Left colon (tissue), 2 donors: ENCODE measurements at regions of chr9 and their contacts with region 1.

Region 1: GRCh38 chr9:96217754-96218693 is 84.0 kb downstream of the HSD17B3 start:
- DNase-seq: peak; percentile 44 to 83
- ATAC-seq: peak; percentile 94

Region 2: DNA sequence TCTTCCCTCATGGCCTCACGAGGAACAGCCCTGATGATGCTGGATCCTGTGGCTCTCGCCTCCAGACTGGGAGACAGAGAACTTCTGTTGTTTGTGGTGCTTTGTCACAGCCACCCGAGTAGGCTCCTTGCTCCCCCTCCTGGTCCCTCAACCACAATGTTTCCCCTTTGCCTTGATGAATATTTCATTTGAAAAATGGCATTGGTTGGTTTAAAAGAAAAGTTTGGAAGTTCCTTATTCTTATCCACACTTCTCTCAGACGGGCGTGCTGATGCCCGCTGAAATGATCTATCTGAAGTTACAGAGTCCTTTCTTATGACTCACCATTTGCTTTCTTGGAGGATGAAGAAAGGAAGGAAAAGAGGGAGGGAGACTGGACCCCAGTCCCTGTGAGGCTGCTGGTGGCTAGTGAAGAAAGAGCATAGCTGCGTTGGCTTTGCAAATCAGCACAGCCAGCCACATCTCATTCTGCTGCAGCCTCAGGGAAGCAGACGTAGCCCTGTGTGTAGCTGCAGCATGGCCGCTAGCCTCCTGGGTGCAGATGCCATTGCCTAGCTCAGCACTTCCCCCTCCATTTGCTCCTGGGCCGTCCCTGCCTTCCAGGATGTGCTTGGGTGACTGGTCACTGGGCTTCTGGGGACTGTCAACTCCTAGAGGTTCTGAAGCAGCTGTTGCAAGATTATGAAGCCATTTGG is 156.6 kb before region 1 on chr9:
- intact Hi-C with region 1: loop called in 1 of 2 experiments (anchors 10 kb)
- DNase-seq: no peak
- ATAC-seq: peak; percentile 64

Region 3: GRCh38 chr9:96080364-96080763 is 137.7 kb before region 1 on chr9:
- intact Hi-C with region 1: no loop called
- DNase-seq: no peak
- ATAC-seq: no peak